IMR-90 (cell line): ENCODE measurements at regions of chr20 and their contacts with region 1.

Region 1: GRCh38 chr20:5788385-5788895 is 38.2 kb downstream of the SHLD1 start:
- DNase-seq: peak; percentile 91
- ATAC-seq: peak; percentile 95
- H3K4me3 ChIP-seq: no peak overlapping the region
- H3K27ac ChIP-seq: no peak overlapping the region
- H3K4me1 ChIP-seq: peaks cover 9% of the 10 kb centered on the region
- H3K27me3 ChIP-seq: no peaks in the 10 kb centered on the region
- CTCF ChIP-seq: peak; percentile 98
- POLR2A ChIP-seq: no peak
- RAD21 ChIP-seq: peak; percentile 98

Region 2: GRCh38 chr20:5529331-5530148 is 258.9 kb before region 1 on chr20:
- CTCF ChIA-PET with region 1: interaction called, 18 read pairs
- POLR2A ChIA-PET with region 1: no interaction called
- dilution Hi-C with region 1: no loop called
- in situ Hi-C with region 1: no loop called
- intact Hi-C with region 1: loop called (anchors 1 kb)
- DNase-seq: peak; percentile 56
- ATAC-seq: peak; percentile 86
- H3K4me3 ChIP-seq: no peak overlapping the region
- H3K27ac ChIP-seq: no peak overlapping the region
- H3K4me1 ChIP-seq: peaks cover 2% of the 10 kb centered on the region
- H3K27me3 ChIP-seq: no peaks in the 10 kb centered on the region
- CTCF ChIP-seq: peak; percentile 82
- POLR2A ChIP-seq: no peak
- RAD21 ChIP-seq: peak; percentile 83

Region 3: GRCh38 chr20:5569021-5569420 is 219.4 kb before region 1 on chr20:
- CTCF ChIA-PET with region 1: interaction called, 17 read pairs
- POLR2A ChIA-PET with region 1: no interaction called
- dilution Hi-C with region 1: no loop called
- in situ Hi-C with region 1: no loop called
- intact Hi-C with region 1: loop called (anchors 1 kb)
- DNase-seq: peak; percentile 59
- ATAC-seq: peak; percentile 75
- H3K4me3 ChIP-seq: no peak overlapping the region
- H3K27ac ChIP-seq: no peak overlapping the region
- H3K4me1 ChIP-seq: no peaks in the 10 kb centered on the region
- H3K27me3 ChIP-seq: no peaks in the 10 kb centered on the region
- CTCF ChIP-seq: peak; percentile 59
- POLR2A ChIP-seq: no peak
- RAD21 ChIP-seq: peak; percentile 63

Region 4: GRCh38 chr20:5608442-5609161 is 179.8 kb before region 1 on chr20:
- CTCF ChIA-PET with region 1: interaction called, 5 read pairs
- POLR2A ChIA-PET with region 1: no interaction called
- dilution Hi-C with region 1: no loop called
- in situ Hi-C with region 1: no loop called
- intact Hi-C with region 1: loop called (anchors 1 kb)
- DNase-seq: peak; percentile 62
- ATAC-seq: no peak
- H3K4me3 ChIP-seq: peak overlapping the region; percentile 93
- H3K27ac ChIP-seq: peak overlapping the region; percentile 3; the same call in 1 of the 2 replicates
- H3K4me1 ChIP-seq: peaks cover 5% of the 10 kb centered on the region; the same call in 1 of the 2 replicates
- H3K27me3 ChIP-seq: no peaks in the 10 kb centered on the region
- CTCF ChIP-seq: no peak
- POLR2A ChIP-seq: peak; percentile 61
- RAD21 ChIP-seq: no peak

Region 5: GRCh38 chr20:6074145-6074561 is 285.7 kb after region 1 on chr20:
- CTCF ChIA-PET with region 1: no interaction called
- POLR2A ChIA-PET with region 1: no interaction called
- dilution Hi-C with region 1: no loop called
- in situ Hi-C with region 1: no loop called
- intact Hi-C with region 1: loop called (anchors 1 kb)
- DNase-seq: no peak
- ATAC-seq: peak; percentile 70
- H3K4me3 ChIP-seq: no peak overlapping the region
- H3K27ac ChIP-seq: no peak overlapping the region
- H3K4me1 ChIP-seq: no peaks in the 10 kb centered on the region
- H3K27me3 ChIP-seq: no peaks in the 10 kb centered on the region
- CTCF ChIP-seq: peak; percentile 15; the same call in 1 of the 2 replicates
- POLR2A ChIP-seq: no peak
- RAD21 ChIP-seq: no peak